Transverse colon (tissue), 4 donors: ENCODE measurements at regions of chrX and their contacts with region 1.

Region 1: GRCh38 chrX:101507372-101507771 is 22.1 kb downstream of the ARMCX4 start:
- DNase-seq: no peak
- H3K4me3 ChIP-seq: no peak overlapping the region
- H3K27ac ChIP-seq: no peak overlapping the region
- H3K4me1 ChIP-seq: no peaks in the 10 kb centered on the region
- H3K27me3 ChIP-seq: no peaks in the 10 kb centered on the region
- CTCF ChIP-seq: no peak
- EP300 ChIP-seq: no peak
- POLR2A ChIP-seq: no peak

Region 2: GRCh38 chrX:101117701-101118100 is 389.7 kb before region 1 on chrX:
- in situ Hi-C with region 1: no loop called
- intact Hi-C with region 1: loop called (anchors 5 kb)
- DNase-seq: no peak
- H3K4me3 ChIP-seq: no peak overlapping the region
- H3K27ac ChIP-seq: no peak overlapping the region
- H3K4me1 ChIP-seq: no peaks in the 10 kb centered on the region
- H3K27me3 ChIP-seq: no peaks in the 10 kb centered on the region
- CTCF ChIP-seq: no peak
- EP300 ChIP-seq: no peak
- POLR2A ChIP-seq: no peak

Region 3: GRCh38 chrX:101191217-101191750 is 316.1 kb before region 1 on chrX:
- in situ Hi-C with region 1: no loop called
- intact Hi-C with region 1: no loop called
- DNase-seq: no peak
- H3K4me3 ChIP-seq: peak overlapping the region in 1 of 4 donors; percentile 30
- H3K27ac ChIP-seq: peak overlapping the region in 3 of 4 donors; percentile 13 to 42 (median 32)
- H3K4me1 ChIP-seq: no peaks in the 10 kb centered on the region
- H3K27me3 ChIP-seq: no peaks in the 10 kb centered on the region
- CTCF ChIP-seq: no peak
- EP300 ChIP-seq: no peak
- POLR2A ChIP-seq: no peak

Region 4: DNA sequence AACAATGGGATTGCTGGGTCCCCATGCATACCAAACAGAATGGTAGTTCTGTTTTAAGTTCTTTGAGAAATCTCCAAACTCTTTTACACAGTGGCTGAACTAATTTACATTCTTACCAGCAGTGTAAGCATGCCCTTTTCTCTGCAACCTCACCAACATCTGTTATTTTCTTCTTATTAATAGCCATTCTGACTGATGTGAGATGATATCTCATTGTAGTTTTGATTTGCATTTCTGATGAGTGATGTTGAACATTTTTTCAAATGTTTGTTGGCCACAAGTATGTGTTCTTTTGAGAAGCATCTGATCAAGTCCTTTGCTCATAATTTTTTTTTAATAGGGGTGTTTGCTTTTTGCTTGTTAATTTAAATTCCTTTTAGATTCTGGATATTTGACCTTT is 465.7 kb after region 1 on chrX:
- in situ Hi-C with region 1: no loop called
- intact Hi-C with region 1: no loop called
- DNase-seq: no peak
- H3K4me3 ChIP-seq: no peak overlapping the region
- H3K27ac ChIP-seq: no peak overlapping the region
- H3K4me1 ChIP-seq: no peaks in the 10 kb centered on the region
- H3K27me3 ChIP-seq: no peaks in the 10 kb centered on the region
- CTCF ChIP-seq: no peak
- EP300 ChIP-seq: no peak
- POLR2A ChIP-seq: no peak